CD8-positive, alpha-beta T cell (primary cell): ENCODE measurements at regions of chr10 and their contacts with region 1.

Region 1: GRCh38 chr10:75094465-75094864 is 17.0 kb upstream of the SAMD8 start:
- DNase-seq: no peak
- ATAC-seq: no peak
- H3K4me3 ChIP-seq: no peak overlapping the region
- H3K4me3 Mint-ChIP-seq: no peak overlapping the region
- H3K27ac ChIP-seq: no peak overlapping the region
- H3K27ac Mint-ChIP-seq: no peak overlapping the region
- H3K4me1 ChIP-seq: no peaks in the 10 kb centered on the region
- H3K4me1 Mint-ChIP-seq: peaks cover 4% of the 10 kb centered on the region
- H3K27me3 ChIP-seq: no peaks in the 10 kb centered on the region
- H3K27me3 Mint-ChIP-seq: no peaks in the 10 kb centered on the region
- CTCF ChIP-seq: no peak

Region 2: DNA sequence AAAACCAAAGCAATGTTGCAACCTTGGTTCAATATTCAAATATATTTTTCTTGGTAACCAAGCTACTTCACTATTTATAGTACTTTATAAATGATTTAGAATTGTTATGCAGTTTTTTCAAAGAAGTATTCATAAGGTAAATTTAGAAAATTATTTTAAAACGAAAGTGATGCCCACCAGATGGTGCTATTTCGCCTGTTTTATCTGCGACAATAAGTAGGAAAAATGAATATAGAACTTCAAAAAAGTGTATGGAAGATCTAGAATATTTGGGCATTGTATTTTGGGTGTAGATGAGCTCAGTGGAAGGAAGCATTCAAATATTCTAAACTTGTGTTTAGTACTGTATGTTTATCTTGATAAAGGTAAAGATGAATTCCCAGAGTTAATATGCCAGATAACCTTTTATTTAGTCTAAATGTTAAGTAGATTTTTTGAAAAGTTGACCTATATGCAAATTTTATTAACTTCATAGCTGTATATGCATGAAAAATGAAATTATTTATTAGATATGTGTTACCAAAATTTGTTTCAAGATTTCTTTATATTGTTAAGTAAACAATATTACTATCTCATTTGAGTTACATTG is 850.3 kb before region 1 on chr10:
- CTCF ChIA-PET with region 1: interaction called, 55 read pairs
- POLR2A ChIA-PET with region 1: no interaction called
- intact Hi-C with region 1: no loop called
- DNase-seq: peak in 3 of 9 experiments; percentile 26 to 68 (median 60)
- ATAC-seq: no peak
- H3K4me3 ChIP-seq: no peak overlapping the region
- H3K4me3 Mint-ChIP-seq: no peak overlapping the region
- H3K27ac ChIP-seq: no peak overlapping the region
- H3K27ac Mint-ChIP-seq: no peak overlapping the region
- H3K4me1 ChIP-seq: no peaks in the 10 kb centered on the region
- H3K4me1 Mint-ChIP-seq: peaks cover 2% of the 10 kb centered on the region
- H3K27me3 ChIP-seq: no peaks in the 10 kb centered on the region
- H3K27me3 Mint-ChIP-seq: no peaks in the 10 kb centered on the region
- CTCF ChIP-seq: peak; percentile 73